ENCODE measurements at regions of chr14 and their contacts with region 1.

Region 1: GRCh38 chr14:69129264-69129880 is 23.5 kb downstream of the DCAF5 start:
- DNase-seq: peak; percentile 52
- ATAC-seq: peak; percentile 96
- H3K4me3 ChIP-seq: no peak overlapping the region
- H3K27ac ChIP-seq: no peak overlapping the region
- H3K4me1 ChIP-seq: peaks cover 0 to 12% of the 10 kb centered on the region in 2 experiments; a peak in 2 of 4 replicates
- H3K27me3 ChIP-seq: no peaks in the 10 kb centered on the region
- CTCF ChIP-seq: peak; percentile 73 to 98 (median 93); a peak in 5 of 6 replicates
- POLR2A ChIP-seq: no peak
- RAD21 ChIP-seq: peak; percentile 84

Region 2: GRCh38 chr14:68506021-68506644 is 623.2 kb before region 1 on chr14:
- CTCF ChIA-PET with region 1: no interaction called
- POLR2A ChIA-PET with region 1: no interaction called
- RAD21 ChIA-PET with region 1: no interaction called
- intact Hi-C with region 1: no loop called
- DNase-seq: no peak
- ATAC-seq: no peak
- H3K4me3 ChIP-seq: no peak overlapping the region
- H3K27ac ChIP-seq: no peak overlapping the region
- H3K4me1 ChIP-seq: peaks cover 45 to 49% of the 10 kb centered on the region in 2 experiments
- H3K27me3 ChIP-seq: no peaks in the 10 kb centered on the region
- CTCF ChIP-seq: no peak
- POLR2A ChIP-seq: no peak
- RAD21 ChIP-seq: no peak

Region 3: GRCh38 chr14:69151315-69152049 is 22.1 kb after region 1 on chr14:
- CTCF ChIA-PET with region 1: interaction called, 18 read pairs
- POLR2A ChIA-PET with region 1: interaction called, 4 read pairs
- RAD21 ChIA-PET with region 1: no interaction called
- intact Hi-C with region 1: no loop called
- DNase-seq: peak; percentile 48
- ATAC-seq: peak; percentile 64
- H3K4me3 ChIP-seq: peak overlapping the region; percentile 82 to 83
- H3K27ac ChIP-seq: peak overlapping the region; percentile 89
- H3K4me1 ChIP-seq: peaks cover 22 to 29% of the 10 kb centered on the region in 2 experiments
- H3K27me3 ChIP-seq: no peaks in the 10 kb centered on the region
- CTCF ChIP-seq: peak; percentile 27 to 47 (median 32); a peak in 4 of 6 replicates
- POLR2A ChIP-seq: no peak
- RAD21 ChIP-seq: peak; percentile 42

Region 4: DNA sequence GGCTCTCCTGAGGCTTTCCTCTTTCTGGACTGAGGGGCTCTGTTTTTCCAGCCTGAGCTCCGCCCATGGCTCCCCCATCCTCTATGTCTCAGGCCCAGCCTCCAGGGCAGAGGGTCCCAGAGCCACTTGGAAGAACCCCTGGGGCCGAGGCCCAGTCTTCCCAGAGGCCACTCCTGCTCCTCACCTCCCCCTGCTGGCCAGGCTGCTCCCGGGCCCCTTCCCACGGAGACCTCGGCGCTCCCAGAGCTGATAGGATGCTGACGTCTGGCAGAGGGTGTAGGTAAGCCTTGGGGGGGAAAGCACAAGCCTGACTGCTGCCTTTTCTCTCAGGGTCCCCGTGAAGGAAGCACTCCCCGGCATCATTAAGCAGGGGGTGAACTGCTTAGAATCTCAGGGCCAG is 217.3 kb after region 1 on chr14:
- CTCF ChIA-PET with region 1: interaction called, 6 read pairs
- POLR2A ChIA-PET with region 1: no interaction called
- RAD21 ChIA-PET with region 1: no interaction called
- intact Hi-C with region 1: loop called (anchors 1 kb)
- DNase-seq: no peak
- ATAC-seq: peak; percentile 92
- H3K4me3 ChIP-seq: no peak overlapping the region
- H3K27ac ChIP-seq: no peak overlapping the region
- H3K4me1 ChIP-seq: no peaks in the 10 kb centered on the region
- H3K27me3 ChIP-seq: no peaks in the 10 kb centered on the region
- CTCF ChIP-seq: peak; percentile 58 to 90 (median 74); a peak in 5 of 6 replicates
- POLR2A ChIP-seq: no peak
- RAD21 ChIP-seq: peak; percentile 57

Region 5: DNA sequence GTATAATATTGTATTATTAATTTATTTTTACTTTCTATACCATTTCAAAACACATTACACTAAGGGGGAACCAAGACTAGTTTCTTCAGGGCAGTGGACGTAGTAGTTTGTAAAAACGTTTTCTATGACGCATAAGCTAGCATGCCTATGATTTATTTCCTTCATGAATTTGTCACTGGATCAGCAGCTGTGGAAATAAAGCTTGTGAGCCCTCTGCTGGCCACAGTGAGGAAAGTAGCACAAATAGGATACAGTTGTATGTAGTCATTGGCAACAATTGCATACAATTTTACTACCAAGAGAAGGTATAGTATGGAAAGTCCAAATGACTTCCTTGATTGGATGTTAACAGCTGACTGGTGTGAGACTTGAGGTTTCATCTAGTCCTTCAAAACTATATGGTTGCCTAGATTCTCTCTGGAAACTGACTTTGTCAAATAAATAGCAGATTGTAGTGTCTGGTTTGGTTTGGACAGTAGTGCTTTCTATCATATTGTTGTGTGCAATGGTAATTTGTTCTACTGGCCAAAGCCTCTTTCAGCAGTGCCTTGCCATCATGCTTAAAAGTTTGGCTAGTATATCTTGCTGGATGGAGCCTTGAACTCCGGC is 330.8 kb after region 1 on chr14:
- CTCF ChIA-PET with region 1: interaction called, 11 read pairs
- POLR2A ChIA-PET with region 1: no interaction called
- RAD21 ChIA-PET with region 1: interaction called, 3 read pairs
- intact Hi-C with region 1: loop called (anchors 1 kb)
- DNase-seq: peak; percentile 63
- ATAC-seq: peak; percentile 97
- H3K4me3 ChIP-seq: no peak overlapping the region
- H3K27ac ChIP-seq: no peak overlapping the region
- H3K4me1 ChIP-seq: no peaks in the 10 kb centered on the region
- H3K27me3 ChIP-seq: no peaks in the 10 kb centered on the region
- CTCF ChIP-seq: peak; percentile 68 to 82 (median 80); a peak in 5 of 6 replicates
- POLR2A ChIP-seq: no peak
- RAD21 ChIP-seq: peak; percentile 79